ENCODE measurements at regions of chr1 and their contacts with region 1.

Region 1: DNA sequence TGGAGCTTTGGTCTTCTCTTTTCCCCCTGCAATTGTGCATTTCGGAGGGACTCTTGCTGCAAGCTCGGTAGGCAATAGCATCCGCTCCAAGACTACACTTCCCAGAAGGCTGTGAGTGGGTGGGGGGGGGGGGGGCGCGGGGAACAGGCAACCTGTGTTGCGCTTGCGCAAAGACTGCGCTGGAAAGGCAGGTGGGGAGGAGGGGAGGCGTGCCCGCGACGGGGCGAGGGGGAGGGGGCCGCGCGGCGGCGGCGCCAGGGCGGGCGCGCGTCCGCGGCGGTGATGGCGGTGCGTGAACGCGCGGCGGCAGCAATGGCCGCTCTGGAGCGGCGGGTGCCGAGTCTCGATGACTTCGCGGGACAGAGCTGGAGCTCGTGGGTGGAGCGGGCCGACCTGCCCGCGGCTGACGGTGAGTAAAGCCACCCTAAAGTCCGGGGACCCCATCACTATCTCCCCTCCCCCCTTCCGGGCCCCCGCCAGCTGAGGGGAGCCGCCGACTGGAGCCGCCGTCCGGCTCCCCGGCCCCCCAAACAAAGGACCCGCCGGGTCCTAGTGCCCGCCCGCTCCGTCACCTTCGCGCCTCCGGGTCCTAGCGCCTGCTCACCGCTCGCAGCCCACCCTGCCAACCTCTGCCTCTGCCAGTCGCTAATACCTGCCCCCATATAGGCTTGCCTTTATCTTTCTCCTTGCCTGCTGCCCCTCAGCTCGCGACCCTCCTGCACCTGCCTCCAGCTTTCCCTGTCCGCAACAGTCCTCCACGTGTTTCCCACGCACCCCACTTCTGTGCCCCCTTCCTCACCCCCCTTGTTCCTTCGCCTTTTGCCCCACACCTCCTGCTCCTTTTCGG is at the start of gene ATXN7L2:
- DNase-seq: peak; percentile 86
- H3K4me3 Mint-ChIP-seq: peak within 1 kb of the TSS; percentile 91
- H3K27ac Mint-ChIP-seq: peak within 1 kb of the TSS; percentile 86
- H3K4me1 Mint-ChIP-seq: peaks cover 30% of the 10 kb centered on the region
- H3K27me3 Mint-ChIP-seq: peaks cover 21% of the 10 kb centered on the region
- total RNA-seq, gene ATXN7L2: 11.9 and 12.9 TPM in 2 replicates

Region 2: GRCh38 chr1:109493805-109494539 is 10.1 kb after region 1 on chr1 and contains the start of gene CYB561D1:
- intact Hi-C with region 1: loop called (anchors 1 kb)
- DNase-seq: peak; percentile 87
- H3K4me3 Mint-ChIP-seq: peak within 1 kb of the TSS; percentile 94
- H3K27ac Mint-ChIP-seq: peak within 1 kb of the TSS; percentile 75
- H3K4me1 Mint-ChIP-seq: peaks cover 24% of the 10 kb centered on the region
- H3K27me3 Mint-ChIP-seq: no peaks in the 10 kb centered on the region
- total RNA-seq, gene CYB561D1: 11.1 and 13.6 TPM in 2 replicates

Region 3: GRCh38 chr1:109509176-109510134 is 25.6 kb after region 1 on chr1 and contains the start of gene AMIGO1:
- intact Hi-C with region 1: no loop called
- DNase-seq: peak; percentile 41
- H3K4me3 Mint-ChIP-seq: peak within 1 kb of the TSS; percentile 81
- H3K27ac Mint-ChIP-seq: no peak within 1 kb of the TSS
- H3K4me1 Mint-ChIP-seq: peaks cover 13% of the 10 kb centered on the region
- H3K27me3 Mint-ChIP-seq: peaks cover 45% of the 10 kb centered on the region
- total RNA-seq, gene AMIGO1: 0.66 and 0.92 TPM in 2 replicates

Region 4: GRCh38 chr1:109620841-109621286 is 137.0 kb after region 1 on chr1:
- intact Hi-C with region 1: loop called (anchors 5 kb)
- DNase-seq: peak; percentile 97
- H3K4me3 Mint-ChIP-seq: peak overlapping the region; percentile 93
- H3K27ac Mint-ChIP-seq: peak overlapping the region; percentile 96
- H3K4me1 Mint-ChIP-seq: peaks cover 63% of the 10 kb centered on the region
- H3K27me3 Mint-ChIP-seq: no peaks in the 10 kb centered on the region

Measured in activated T-helper 2 cell treated with anti-CD3 and anti-CD28 coated beads, Interferon-gamma antibody, Interleukin-2, Interleukin-4, amounts not matched to agents 10 μg/mL and 5 μg/mL and 100 μg/mL, durations not matched to agents 14 hours and 24 hours and 36 hours (primary cell).